GM12878 (cell line): ENCODE measurements at regions of chr1 and their contacts with region 1.

Region 1: DNA sequence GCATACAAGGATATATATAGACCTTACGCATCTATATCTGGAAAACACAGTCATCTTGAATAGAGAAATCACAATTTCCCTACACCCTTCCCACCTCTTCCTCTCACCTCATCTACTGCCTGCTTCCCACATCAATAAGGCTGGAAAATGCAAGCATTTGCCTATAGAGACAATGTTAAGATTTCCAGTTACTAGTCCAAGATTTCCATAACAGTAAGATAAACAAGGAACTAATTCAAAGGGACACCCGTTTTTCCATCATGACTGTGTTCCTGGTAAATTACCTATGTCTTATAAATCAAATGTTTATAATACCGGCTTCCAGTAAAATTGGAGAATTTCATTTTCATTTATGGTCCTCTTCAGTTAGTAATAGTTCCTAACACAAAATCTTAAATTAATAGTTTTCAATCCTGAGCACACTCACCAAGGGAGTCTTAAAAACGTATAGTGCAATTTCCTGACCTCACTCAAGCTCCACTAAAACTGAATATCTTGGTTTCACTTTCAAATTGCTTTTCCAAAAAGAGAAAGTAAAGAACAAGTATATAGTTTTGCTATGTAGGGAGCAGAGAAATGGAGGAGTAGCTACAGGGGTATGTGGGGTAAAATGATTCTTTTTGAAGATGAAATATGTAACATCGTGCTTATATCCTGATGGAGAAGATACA is 398.7 kb downstream of the PLPP3 start:
- DNase-seq: no peak
- ATAC-seq: peak; percentile 80
- H3K4me3 ChIP-seq: no peak overlapping the region
- H3K27ac ChIP-seq: no peak overlapping the region
- H3K4me1 ChIP-seq: no peaks in the 10 kb centered on the region; the same call in 1 of the 2 replicates
- H3K27me3 ChIP-seq: no peaks in the 10 kb centered on the region
- CTCF ChIP-seq: no peak
- EP300 ChIP-seq: no peak
- POLR2A ChIP-seq: no peak
- RAD21 ChIP-seq: no peak

Region 2: DNA sequence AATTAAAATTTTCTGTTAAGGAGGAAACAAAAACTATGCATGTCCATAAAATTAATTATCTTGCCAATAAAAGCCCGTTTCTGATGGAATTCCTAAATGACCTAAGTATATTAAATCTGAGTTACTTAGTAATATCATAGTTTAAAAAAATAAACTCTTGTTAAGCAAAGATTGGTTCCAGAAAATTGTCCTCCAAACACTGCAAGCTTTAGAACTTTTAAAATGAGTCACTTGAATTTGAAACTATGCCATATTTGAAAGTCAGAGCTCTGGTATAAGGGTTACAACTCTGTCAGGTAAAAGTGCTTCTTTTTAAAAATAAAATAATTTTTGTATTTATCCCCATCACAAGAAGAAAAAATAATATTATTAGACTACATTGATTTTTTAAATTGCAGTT is 10.8 kb before region 1 on chr1:
- CTCF ChIA-PET with region 1: interaction called, 38 read pairs
- POLR2A ChIA-PET with region 1: interaction called, 3 read pairs
- RAD21 ChIA-PET with region 1: interaction called, 3 read pairs
- SMC1A ChIA-PET with region 1: interaction called, 55 read pairs
- in situ Hi-C with region 1: no loop called
- intact Hi-C with region 1: no loop called
- DNase-seq: no peak
- ATAC-seq: no peak
- H3K4me3 ChIP-seq: no peak overlapping the region
- H3K27ac ChIP-seq: no peak overlapping the region
- H3K4me1 ChIP-seq: no peaks in the 10 kb centered on the region
- H3K27me3 ChIP-seq: no peaks in the 10 kb centered on the region
- CTCF ChIP-seq: no peak
- EP300 ChIP-seq: no peak
- POLR2A ChIP-seq: no peak
- RAD21 ChIP-seq: no peak

Region 3: DNA sequence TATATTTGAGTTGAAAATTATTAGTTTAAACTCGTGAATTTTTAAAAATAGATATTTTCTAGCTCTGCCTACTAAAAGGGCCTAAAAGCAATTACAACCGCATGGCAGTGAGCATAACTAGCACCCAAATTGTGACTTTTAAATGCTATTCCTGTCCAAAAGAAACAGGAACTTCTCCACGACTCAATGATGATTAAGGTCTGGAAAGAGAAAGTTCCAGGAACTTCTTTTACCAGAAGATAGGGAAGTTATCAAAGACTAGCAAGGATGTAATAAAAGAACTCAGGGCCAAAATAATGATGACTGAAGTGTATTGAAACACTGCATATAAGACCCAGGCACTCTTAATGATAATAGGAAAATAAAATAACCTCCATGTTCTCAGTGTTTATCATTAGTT is 85.7 kb after region 1 on chr1:
- CTCF ChIA-PET with region 1: no interaction called
- POLR2A ChIA-PET with region 1: no interaction called
- RAD21 ChIA-PET with region 1: no interaction called
- SMC1A ChIA-PET with region 1: no interaction called
- in situ Hi-C with region 1: no loop called
- intact Hi-C with region 1: no loop called
- DNase-seq: no peak
- ATAC-seq: no peak
- H3K4me3 ChIP-seq: no peak overlapping the region
- H3K27ac ChIP-seq: no peak overlapping the region
- H3K4me1 ChIP-seq: no peaks in the 10 kb centered on the region
- H3K27me3 ChIP-seq: no peaks in the 10 kb centered on the region; a peak in 1 of 4 replicates
- CTCF ChIP-seq: no peak
- EP300 ChIP-seq: no peak
- POLR2A ChIP-seq: no peak
- RAD21 ChIP-seq: no peak